Activated naive CD8-positive, alpha-beta T cell treated with anti-CD3 and anti-CD28 coated beads, Interleukin-2, amount 10 ng/mL, durations not matched to agents 7 days and 5 days (primary cell): ENCODE measurements at regions of chr1 and their contacts with region 1.

Region 1: GRCh38 chr1:44721485-44722361 is 9.2 kb downstream of the RNU5D-1 start:
- DNase-seq: peak; percentile 65
- ATAC-seq: peak; percentile 89
- H3K4me3 Mint-ChIP-seq: peak overlapping the region; percentile 61
- H3K27ac Mint-ChIP-seq: peak overlapping the region; percentile 94
- H3K4me1 Mint-ChIP-seq: peaks cover 60% of the 10 kb centered on the region
- H3K27me3 Mint-ChIP-seq: no peaks in the 10 kb centered on the region

Region 2: GRCh38 chr1:44084998-44085675 is 636.6 kb before region 1 on chr1:
- POLR2A ChIA-PET with region 1: no interaction called
- DNase-seq: no peak
- ATAC-seq: no peak
- H3K4me3 Mint-ChIP-seq: no peak overlapping the region
- H3K27ac Mint-ChIP-seq: no peak overlapping the region
- H3K4me1 Mint-ChIP-seq: no peaks in the 10 kb centered on the region
- H3K27me3 Mint-ChIP-seq: peaks cover 17% of the 10 kb centered on the region

Region 3: DNA sequence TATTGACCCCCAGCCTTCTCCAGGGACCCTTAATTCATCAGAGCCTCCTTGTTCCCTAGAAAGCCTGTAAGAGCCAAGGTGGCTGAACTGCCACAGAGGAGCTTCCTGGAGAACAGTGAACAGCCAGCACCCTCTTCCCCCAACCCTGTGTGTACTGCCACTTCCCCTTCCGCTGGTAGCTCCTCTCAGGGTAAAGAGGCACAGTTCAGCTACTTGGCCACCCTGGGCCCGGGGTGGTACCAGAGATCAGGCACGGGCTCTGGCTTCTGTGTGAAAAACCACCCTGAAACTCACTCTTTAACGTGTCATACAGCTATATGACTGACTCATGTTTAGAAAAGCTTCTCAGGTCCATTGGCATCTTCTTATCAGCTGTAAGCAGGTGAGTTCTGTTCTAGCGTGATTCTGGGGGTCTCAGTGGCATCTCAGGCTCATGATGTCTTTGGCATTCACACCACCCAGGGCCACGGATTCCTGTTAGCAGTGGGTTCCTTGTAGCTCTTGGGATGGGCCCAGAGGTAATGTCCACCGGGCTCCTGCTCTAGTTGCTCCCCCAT is 24.9 kb before region 1 on chr1:
- POLR2A ChIA-PET with region 1: interaction called, 51 read pairs
- DNase-seq: peak; percentile 54
- ATAC-seq: peak; percentile 98
- H3K4me3 Mint-ChIP-seq: peak overlapping the region; percentile 65
- H3K27ac Mint-ChIP-seq: peak overlapping the region; percentile 83
- H3K4me1 Mint-ChIP-seq: peaks cover 25% of the 10 kb centered on the region
- H3K27me3 Mint-ChIP-seq: no peaks in the 10 kb centered on the region

Region 4: GRCh38 chr1:44775078-44775929 is 53.6 kb after region 1 on chr1 and contains the start of gene RPS8:
- POLR2A ChIA-PET with region 1: interaction called, 65 read pairs
- DNase-seq: peak; percentile 86
- ATAC-seq: peak; percentile 80
- H3K4me3 Mint-ChIP-seq: peak within 1 kb of the TSS; percentile 91
- H3K27ac Mint-ChIP-seq: peak within 1 kb of the TSS; percentile 96
- H3K4me1 Mint-ChIP-seq: peaks cover 24% of the 10 kb centered on the region
- H3K27me3 Mint-ChIP-seq: no peaks in the 10 kb centered on the region
- total RNA-seq, gene RPS8: 1,522 to 1,548 TPM

Region 5: DNA sequence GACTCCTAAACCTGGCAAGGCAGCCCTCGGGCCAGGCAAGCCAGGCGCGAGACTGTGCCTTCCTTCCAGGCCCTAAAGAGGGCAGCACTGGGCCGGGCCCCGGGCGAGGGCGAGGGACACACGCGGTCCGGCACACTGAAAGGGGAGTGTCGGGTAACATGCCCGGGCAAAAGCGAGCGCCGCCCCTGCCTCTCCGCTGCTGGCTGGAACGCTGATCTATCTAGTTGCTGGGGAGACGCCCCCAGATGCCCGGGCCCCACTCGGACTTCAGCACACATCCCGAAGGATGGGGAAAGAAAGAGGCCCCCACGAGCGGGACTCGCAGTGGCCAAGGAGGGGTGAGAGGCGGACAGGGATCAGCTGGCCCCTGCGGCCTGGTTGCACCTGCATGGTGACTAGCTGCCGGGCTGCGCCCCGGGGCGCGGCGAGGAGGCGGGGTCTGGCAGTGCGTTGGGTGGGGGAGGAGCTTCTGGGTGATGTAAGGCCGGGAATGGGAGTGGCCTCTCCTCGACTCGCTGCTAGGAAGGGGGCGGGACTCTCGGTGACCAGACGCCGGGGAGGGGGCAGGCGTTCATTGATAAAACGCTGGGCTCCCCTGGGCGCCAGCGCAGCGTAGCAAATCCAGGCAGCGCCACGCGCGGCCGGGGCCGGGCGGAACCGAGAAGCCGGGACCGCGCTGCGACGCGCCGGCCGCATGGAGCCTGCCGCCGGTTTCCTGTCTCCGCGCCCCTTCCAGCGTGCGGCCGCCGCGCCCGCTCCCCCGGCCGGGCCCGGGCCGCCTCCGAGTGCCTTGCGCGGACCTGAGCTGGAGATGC is 78.3 kb after region 1 on chr1 and contains the start of gene PLK3:
- POLR2A ChIA-PET with region 1: interaction called, 181 read pairs
- DNase-seq: peak; percentile 96
- ATAC-seq: peak; percentile 77
- H3K4me3 Mint-ChIP-seq: peak within 1 kb of the TSS; percentile 92
- H3K27ac Mint-ChIP-seq: peak within 1 kb of the TSS; percentile 97
- H3K4me1 Mint-ChIP-seq: peaks cover 24% of the 10 kb centered on the region
- H3K27me3 Mint-ChIP-seq: no peaks in the 10 kb centered on the region
- total RNA-seq, gene PLK3: 68.8 to 70.7 TPM

Region 6: GRCh38 chr1:44985747-44986359 is 264.1 kb after region 1 on chr1:
- POLR2A ChIA-PET with region 1: interaction called, 15 read pairs
- DNase-seq: no peak
- ATAC-seq: peak; percentile 6
- H3K4me3 Mint-ChIP-seq: peak overlapping the region; percentile 100
- H3K27ac Mint-ChIP-seq: peak overlapping the region; percentile 97
- H3K4me1 Mint-ChIP-seq: peaks cover 20% of the 10 kb centered on the region
- H3K27me3 Mint-ChIP-seq: no peaks in the 10 kb centered on the region

Region 7: GRCh38 chr1:45339789-45340570 is 618.3 kb after region 1 on chr1 and contains the starts of genes MUTYH and TOE1:
- POLR2A ChIA-PET with region 1: interaction called, 22 read pairs
- DNase-seq: peak; percentile 96
- ATAC-seq: peak; percentile 87
- H3K4me3 Mint-ChIP-seq: peak within 1 kb of the TSS; percentile 98
- H3K27ac Mint-ChIP-seq: peak within 1 kb of the TSS; percentile 98
- H3K4me1 Mint-ChIP-seq: peaks cover 35% of the 10 kb centered on the region
- H3K27me3 Mint-ChIP-seq: no peaks in the 10 kb centered on the region
- total RNA-seq, gene MUTYH: 59.9 to 68.8 TPM
- total RNA-seq, gene TOE1: 20.4 to 22.2 TPM